Head of caudate nucleus (tissue), 42 donors: ENCODE measurements at regions of chr6 and their contacts with region 1.

Region 1: GRCh38 chr6:137271245-137272183 is 52.3 kb upstream of the IFNGR1 start:
- DNase-seq: peak in 7 of 42 donors; percentile 11 to 69 (median 38)

Region 2: GRCh38 chr6:137589067-137589848 is 317.7 kb after region 1 on chr6:
- intact Hi-C with region 1: no loop called
- DNase-seq: no peak

Region 3: DNA sequence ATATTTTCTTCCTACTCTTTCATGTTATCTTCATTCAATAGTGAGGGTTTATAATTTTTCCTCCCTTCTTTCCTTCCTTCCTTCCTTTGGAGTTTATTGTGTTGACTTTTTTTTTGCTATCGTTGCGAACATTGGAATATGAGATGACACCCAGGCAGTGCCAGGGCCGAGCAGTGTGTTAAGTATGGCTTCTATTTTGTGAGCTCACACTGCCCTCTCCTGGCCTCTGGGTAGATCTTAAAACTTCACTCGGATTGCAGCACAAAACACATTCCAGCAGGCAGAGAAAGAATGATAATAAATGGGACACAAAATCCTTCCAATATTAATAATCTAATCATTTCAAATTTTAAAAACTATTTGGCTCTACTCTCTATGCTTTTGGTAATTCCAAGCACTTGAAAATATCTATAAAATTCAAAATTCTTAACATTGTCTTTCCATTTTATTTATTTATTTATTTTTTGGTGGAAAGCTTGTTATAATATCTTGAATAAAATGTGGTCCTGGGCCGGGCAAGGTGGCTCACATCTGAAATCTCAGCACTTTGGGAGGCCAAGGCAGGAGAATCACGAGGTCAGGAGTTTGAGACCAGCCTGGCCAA is 370.1 kb after region 1 on chr6:
- intact Hi-C with region 1: loop called (anchors 2 kb)
- DNase-seq: peak; percentile 55 to 93 (median 82)